HEK293 (cell line): ENCODE measurements at regions of chr6 and their contacts with region 1.

Region 1: DNA sequence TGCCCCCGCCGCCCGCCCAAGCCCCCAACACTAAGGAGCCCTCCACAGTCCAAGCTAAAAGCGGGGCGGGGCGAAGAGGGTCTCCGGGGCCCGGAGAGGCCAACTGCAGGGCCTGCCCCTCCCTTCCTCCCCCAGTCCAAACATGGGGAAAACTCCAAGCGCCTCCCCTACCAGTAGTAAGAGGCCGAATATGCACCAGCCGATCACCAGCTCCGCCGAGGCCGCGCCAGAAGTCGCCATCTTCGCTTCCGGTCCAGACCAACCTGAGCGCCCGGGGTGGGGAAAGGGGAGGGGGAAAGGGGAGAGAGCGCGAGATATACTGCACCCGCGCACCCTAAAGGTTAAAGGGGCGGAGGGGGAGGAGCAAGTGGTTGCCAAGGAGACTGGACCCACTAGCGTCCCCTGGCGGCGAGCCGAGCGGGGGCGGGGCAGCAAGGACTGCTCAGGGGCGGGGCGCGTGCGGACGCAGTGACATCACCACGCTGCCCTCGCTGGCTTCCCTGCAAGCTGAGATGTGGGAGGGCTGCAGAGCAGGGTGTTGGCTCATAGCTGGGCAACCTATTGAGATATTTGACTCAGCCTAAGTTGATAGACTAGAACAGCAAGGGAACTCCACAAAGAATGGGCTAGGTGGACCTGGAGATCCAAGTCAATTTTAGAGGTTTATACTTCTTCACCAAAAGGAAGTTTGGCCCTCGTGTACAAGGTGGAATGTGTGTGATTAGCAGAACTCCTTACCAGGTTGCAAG is at the start of gene LMBRD1:
- H3K4me3 ChIP-seq: peak within 1 kb of the TSS; percentile 76
- H3K27ac ChIP-seq: peak within 1 kb of the TSS; percentile 50
- H3K4me1 ChIP-seq: peaks cover 4% of the 10 kb centered on the region; the same call in 1 of the 2 replicates
- CTCF ChIP-seq: peak; percentile 97

Region 2: DNA sequence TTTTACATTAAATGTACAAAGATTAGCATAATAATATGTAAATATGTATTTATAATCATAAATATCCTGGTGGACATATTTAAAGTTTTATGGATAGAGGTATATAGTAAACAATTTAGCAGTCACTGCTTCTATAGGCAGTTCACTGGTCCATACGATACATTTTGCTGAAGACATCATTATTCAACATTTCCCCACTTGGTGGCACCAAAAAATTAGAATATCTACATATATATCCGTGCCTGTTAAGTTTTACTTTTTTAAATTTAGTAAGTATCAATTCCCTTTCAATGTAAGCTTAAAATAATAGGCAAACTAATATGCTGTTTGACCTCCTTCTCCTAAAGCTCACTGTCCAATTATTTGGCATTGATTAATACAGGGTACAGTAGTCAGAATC is 64.2 kb before region 1 on chr6:
- CTCF ChIA-PET with region 1: interaction called, 10 read pairs
- POLR2A ChIA-PET with region 1: no interaction called
- H3K4me3 ChIP-seq: no peak overlapping the region
- H3K27ac ChIP-seq: no peak overlapping the region
- H3K4me1 ChIP-seq: no peaks in the 10 kb centered on the region
- CTCF ChIP-seq: no peak

Region 3: DNA sequence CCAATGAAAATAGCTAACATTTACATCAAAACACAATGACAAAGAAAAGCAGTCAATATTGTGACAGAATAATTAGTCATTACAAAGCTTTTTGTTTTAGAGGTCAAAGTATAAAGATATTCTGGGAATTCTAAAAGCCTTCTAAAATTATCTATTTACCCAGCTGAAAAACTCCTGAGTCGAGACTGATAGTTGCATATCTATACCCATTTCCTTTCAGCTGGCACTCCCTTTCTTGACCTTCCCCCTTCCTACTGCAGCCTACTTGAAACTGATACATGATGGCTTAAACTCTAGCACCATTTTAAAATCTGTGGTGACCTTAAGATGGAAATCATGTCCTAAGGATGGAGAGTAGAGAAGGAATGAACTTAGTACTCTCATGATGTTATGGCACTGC is 38.6 kb before region 1 on chr6:
- CTCF ChIA-PET with region 1: no interaction called
- POLR2A ChIA-PET with region 1: no interaction called
- H3K4me3 ChIP-seq: no peak overlapping the region
- H3K27ac ChIP-seq: no peak overlapping the region
- H3K4me1 ChIP-seq: no peaks in the 10 kb centered on the region
- CTCF ChIP-seq: no peak

Region 4: GRCh38 chr6:69813508-69813907 is 16.7 kb after region 1 on chr6:
- CTCF ChIA-PET with region 1: interaction called, 12 read pairs
- POLR2A ChIA-PET with region 1: interaction called, 4 read pairs
- H3K4me3 ChIP-seq: no peak overlapping the region
- H3K27ac ChIP-seq: no peak overlapping the region
- H3K4me1 ChIP-seq: no peaks in the 10 kb centered on the region
- CTCF ChIP-seq: no peak

Region 5: DNA sequence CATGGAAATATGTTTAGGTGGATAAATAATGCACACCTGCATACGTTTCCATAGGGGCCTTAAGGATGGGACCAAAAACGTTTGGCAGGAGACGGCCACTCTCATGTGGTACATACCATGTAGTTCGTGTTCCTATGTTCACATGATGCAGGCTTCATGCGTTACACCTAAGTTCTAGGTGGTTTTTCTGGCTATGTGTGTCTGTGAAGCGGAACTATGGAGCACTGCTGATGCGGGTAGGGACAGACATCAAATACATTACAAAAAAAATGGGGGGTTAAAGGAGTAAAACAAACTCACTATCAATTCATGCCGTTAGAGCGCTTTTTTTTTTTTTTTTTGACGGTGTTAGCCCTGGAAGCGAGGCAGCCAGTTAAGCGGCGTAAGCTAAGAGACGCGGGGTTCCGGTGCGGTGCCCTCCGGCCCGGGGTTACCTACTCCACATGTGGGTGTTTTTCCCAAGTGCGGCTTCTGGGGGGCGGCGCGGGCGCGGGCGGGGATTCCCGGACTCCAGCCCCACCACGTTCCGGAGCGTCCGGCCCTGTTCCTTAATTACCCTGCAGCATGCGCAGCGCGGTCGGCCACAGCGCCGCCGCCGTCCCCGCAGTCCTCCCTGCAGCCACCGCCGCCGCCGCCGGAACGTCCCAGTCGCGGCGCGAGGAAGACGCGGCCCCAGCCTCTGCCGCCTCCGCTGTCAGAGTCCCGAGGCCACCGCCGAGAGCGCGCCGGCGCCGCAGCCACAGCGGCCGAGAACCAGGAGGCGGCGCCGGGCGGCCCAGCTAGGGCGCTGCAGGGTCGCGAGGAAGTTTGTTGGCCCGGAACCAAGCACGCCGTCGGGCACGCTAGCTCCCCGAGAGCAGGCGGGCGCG is 70.2 kb after region 1 on chr6:
- CTCF ChIA-PET with region 1: interaction called, 5 read pairs
- POLR2A ChIA-PET with region 1: interaction called, 16 read pairs
- H3K4me3 ChIP-seq: peak overlapping the region; percentile 57
- H3K27ac ChIP-seq: peak overlapping the region; percentile 78; the same call in 1 of the 2 replicates
- H3K4me1 ChIP-seq: peaks cover 19% of the 10 kb centered on the region
- CTCF ChIP-seq: peak; percentile 61; the same call in 1 of the 2 replicates